ENCODE measurements at regions of chr19 and their contacts with region 1.

Region 1: DNA sequence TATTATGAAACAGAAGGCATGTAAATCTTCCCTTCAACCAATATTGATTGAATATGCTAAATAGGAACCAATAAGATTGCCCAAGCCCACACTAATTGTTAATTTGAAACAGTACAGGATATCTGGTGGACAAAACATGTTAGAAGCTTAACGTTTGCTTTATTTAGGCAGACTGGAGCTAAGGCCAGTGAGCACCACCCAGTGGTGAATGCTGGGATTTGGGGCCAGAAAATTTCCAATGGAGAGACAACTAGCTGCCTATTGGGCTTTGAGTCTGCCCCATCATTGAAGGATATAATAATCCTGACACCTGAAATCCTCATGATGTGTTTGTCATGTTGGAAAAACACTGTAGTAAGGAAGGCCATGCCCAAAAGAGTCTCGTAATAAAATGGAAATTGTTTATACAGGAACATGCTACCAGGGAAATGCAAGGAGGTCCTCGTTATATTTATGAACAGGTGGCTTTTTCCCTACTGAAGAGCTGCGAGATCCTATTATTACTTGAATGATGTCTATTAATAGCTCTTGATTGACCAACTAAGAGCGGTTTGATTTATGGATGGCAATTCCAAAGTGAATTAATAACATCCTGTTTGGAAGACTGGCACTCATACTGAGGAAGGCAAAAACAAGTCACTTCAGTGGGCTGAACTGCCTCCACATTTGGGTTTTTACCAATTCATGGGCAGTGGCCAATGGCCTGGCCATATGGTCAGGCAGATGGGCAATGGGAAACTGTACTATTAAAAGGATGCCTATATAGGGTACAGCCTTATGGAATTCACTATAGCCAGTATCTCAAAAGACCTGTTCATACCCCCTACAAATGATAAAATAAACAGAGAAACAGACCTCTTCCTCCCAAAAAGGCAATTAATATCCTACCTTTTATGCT is 8.7 kb downstream of the SIGLECL1 start:
- DNase-seq: peak; percentile 57
- CTCF ChIP-seq: peak; percentile 78

Region 2: GRCh38 chr19:51271067-51271466 is 11.5 kb after region 1 on chr19:
- CTCF ChIA-PET with region 1: interaction called, 14 read pairs
- POLR2A ChIA-PET with region 1: no interaction called
- DNase-seq: no peak
- CTCF ChIP-seq: no peak

Region 3: DNA sequence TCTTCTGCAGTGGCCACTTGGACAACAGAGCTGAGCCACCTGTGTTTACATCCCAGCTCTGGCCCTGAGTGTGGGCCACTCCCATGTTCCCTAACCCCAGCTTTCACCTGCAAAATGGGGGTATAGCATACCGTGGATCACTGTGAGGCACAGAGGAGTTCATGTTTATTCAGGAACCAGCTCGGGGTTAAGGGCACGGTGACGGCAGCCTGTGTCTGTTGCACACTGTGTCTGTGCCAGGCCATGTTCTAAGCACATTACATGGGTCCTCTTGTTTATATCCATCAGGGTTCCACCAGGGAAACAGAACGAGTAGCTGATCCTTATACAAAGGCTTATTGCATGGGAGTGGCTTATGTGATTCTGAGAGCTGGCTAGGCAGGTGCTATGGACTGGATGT is 37.8 kb after region 1 on chr19:
- CTCF ChIA-PET with region 1: no interaction called
- POLR2A ChIA-PET with region 1: no interaction called
- DNase-seq: no peak
- CTCF ChIP-seq: no peak